HEK293 (cell line): ENCODE measurements at regions of chr9 and their contacts with region 1.

Region 1: GRCh38 chr9:34637356-34638137 is at the start of gene SIGMAR1:
- H3K4me3 ChIP-seq: peak within 1 kb of the TSS; percentile 67
- H3K27ac ChIP-seq: peak within 1 kb of the TSS; percentile 77
- H3K4me1 ChIP-seq: no peaks in the 10 kb centered on the region
- CTCF ChIP-seq: peak; percentile 20; the same call in 1 of the 2 replicates

Region 2: GRCh38 chr9:34611829-34612630 is 25.5 kb before region 1 on chr9 and contains the start of gene RPP25L:
- CTCF ChIA-PET with region 1: interaction called, 164 read pairs
- POLR2A ChIA-PET with region 1: interaction called, 11 read pairs
- H3K4me3 ChIP-seq: peak within 1 kb of the TSS; percentile 76
- H3K27ac ChIP-seq: peak within 1 kb of the TSS; percentile 87
- H3K4me1 ChIP-seq: no peaks in the 10 kb centered on the region
- CTCF ChIP-seq: no peak

Region 3: GRCh38 chr9:34620061-34620994 is 17.2 kb before region 1 on chr9 and contains the start of gene DCTN3:
- CTCF ChIA-PET with region 1: interaction called, 164 read pairs
- POLR2A ChIA-PET with region 1: interaction called, 23 read pairs
- H3K4me3 ChIP-seq: peak within 1 kb of the TSS; percentile 91
- H3K27ac ChIP-seq: peak within 1 kb of the TSS; percentile 27; the same call in 1 of the 2 replicates
- H3K4me1 ChIP-seq: no peaks in the 10 kb centered on the region
- CTCF ChIP-seq: no peak

Region 4: GRCh38 chr9:34651876-34652601 is 14.5 kb after region 1 on chr9 and contains the start of gene IL11RA:
- CTCF ChIA-PET with region 1: interaction called, 125 read pairs
- POLR2A ChIA-PET with region 1: interaction called, 90 read pairs
- H3K4me3 ChIP-seq: peak within 1 kb of the TSS; percentile 34
- H3K27ac ChIP-seq: peak within 1 kb of the TSS; percentile 29; the same call in 1 of the 2 replicates
- H3K4me1 ChIP-seq: peaks cover 6% of the 10 kb centered on the region
- CTCF ChIP-seq: no peak

Region 5: DNA sequence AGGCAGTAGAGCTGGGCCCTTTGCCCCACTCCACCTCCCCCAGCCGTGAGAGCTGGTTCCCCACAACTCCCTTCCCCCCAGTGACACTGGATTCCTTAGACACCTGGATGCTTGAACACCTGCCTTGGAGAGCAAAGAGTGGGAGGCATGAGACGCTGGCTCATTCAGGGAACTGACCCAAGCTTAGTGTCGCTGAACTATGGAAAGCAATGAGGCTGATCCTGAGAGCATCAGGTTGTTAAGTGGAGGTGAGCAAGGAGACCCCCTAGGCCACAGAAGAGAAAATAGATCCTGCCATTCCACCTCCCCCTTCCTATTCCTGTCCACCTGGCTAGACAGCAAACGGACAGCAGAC is 51.5 kb after region 1 on chr9:
- CTCF ChIA-PET with region 1: no interaction called
- POLR2A ChIA-PET with region 1: no interaction called
- H3K4me3 ChIP-seq: no peak overlapping the region
- H3K27ac ChIP-seq: no peak overlapping the region
- H3K4me1 ChIP-seq: no peaks in the 10 kb centered on the region
- CTCF ChIP-seq: no peak